Ascending aorta (tissue), 2 donors: ENCODE measurements at regions of chr4 and their contacts with region 1.

Region 1: DNA sequence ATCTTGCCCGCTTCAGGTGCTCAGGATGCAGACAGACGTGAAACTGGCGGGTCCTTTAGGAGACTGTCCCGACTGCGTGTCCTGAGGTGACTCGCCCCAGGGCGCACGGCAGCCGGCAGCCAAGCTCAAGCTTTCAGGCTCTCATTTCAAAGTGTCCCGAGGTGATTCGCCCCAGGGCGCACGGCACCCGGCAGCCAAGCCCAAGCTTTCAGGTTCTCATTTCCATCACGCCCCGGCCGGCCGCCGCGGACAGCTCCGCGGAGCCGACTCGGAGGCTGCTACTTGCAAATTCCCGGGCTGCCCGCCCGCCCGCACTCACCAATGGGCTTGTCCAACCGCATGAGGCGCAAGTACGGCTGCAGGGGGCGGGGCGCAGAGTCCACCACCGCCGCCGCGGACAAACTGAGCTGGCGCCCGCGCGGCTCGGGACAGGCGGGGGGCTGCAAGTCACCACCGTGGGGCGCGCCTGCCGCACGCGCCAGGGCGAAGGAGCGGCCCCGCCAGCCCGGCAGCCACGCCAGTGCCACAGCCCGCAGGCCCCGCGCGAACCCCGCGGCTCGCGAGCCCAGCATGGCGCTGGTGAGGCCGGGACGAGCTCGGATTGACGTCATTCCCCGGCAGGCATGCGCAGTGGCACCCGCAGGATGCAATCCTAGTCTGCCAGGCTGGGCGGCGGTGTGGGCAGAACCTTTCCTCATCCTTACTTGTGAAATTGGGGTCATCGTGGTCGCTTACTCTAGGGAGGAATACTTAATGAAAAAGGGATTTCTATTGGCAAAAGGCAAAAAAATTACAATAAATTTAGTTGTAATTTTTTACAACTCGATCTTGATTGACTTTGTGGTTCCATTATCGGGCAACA is at the start of gene COQ2:
- DNase-seq: peak; percentile 82 to 97
- H3K4me3 ChIP-seq: peak within 1 kb of the TSS; percentile 86 to 91
- H3K27ac ChIP-seq: peak within 1 kb of the TSS; percentile 93 to 94
- H3K4me1 ChIP-seq: peaks cover 0 to 4% of the 10 kb centered on the region in 2 donors
- H3K27me3 ChIP-seq: no peaks in the 10 kb centered on the region
- CTCF ChIP-seq: peak; percentile 23 to 53 (median 36)
- total RNA-seq, gene COQ2: 9.7 TPM

Region 2: GRCh38 chr4:82462415-82462831 is 822.0 kb before region 1 on chr4:
- intact Hi-C with region 1: loop called (anchors 5 kb)
- DNase-seq: peak; percentile 79 to 96
- H3K4me3 ChIP-seq: no peak overlapping the region
- H3K27ac ChIP-seq: peak overlapping the region in 1 of 2 donors; percentile 8
- H3K4me1 ChIP-seq: no peaks in the 10 kb centered on the region
- H3K27me3 ChIP-seq: no peaks in the 10 kb centered on the region
- CTCF ChIP-seq: peak; percentile 48 to 92 (median 86)

Region 3: DNA sequence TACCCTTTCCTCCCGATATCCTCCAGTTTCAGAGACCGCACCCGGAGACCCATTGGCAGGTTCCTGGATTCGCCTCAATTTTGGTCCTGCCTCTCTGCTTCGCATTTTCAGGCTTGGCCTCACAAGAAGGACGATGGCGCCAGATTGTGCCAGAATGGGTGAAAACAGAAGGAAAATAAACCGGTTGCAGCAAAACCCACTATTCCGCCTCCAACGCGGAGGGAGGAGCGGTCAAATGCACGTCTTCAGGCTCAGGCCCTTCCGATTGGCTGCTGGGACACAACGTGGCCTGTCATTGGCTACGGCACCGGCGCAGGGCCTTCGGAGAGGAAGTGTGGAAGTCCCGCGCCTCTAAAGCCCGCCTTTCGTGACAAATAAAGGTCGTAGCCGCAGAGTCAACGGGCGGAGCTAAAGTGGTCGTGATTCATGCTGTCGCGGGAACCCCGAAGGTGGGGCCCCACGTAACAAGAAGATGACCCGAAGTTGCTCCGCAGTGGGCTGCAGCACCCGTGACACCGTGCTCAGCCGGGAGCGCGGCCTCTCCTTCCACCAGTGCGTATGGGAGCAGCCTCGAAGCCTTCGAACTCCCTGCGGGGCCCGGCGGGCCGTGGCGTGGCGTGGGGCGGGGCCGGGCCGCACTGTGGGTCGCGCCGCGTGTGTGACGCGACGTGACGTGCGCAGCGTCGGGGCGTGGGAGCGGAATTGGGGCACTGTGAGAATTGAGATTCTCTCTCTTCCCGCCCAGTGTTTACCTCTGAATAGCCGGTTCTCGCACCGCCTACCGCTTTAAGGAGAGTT is 383.9 kb before region 1 on chr4 and contains the start of gene THAP9:
- intact Hi-C with region 1: loop called (anchors 1 kb)
- DNase-seq: peak; percentile 97 to 99
- H3K4me3 ChIP-seq: peak within 1 kb of the TSS; percentile 69 to 78
- H3K27ac ChIP-seq: peak within 1 kb of the TSS; percentile 98
- H3K4me1 ChIP-seq: peaks cover 0 to 20% of the 10 kb centered on the region in 2 donors
- H3K27me3 ChIP-seq: no peaks in the 10 kb centered on the region
- CTCF ChIP-seq: no peak
- total RNA-seq, gene THAP9: 0.32 TPM

Region 4: GRCh38 chr4:83074086-83074704 is 210.2 kb before region 1 on chr4:
- intact Hi-C with region 1: loop called (anchors 2 kb)
- DNase-seq: no peak
- H3K4me3 ChIP-seq: no peak overlapping the region
- H3K27ac ChIP-seq: no peak overlapping the region
- H3K4me1 ChIP-seq: no peaks in the 10 kb centered on the region
- H3K27me3 ChIP-seq: no peaks in the 10 kb centered on the region
- CTCF ChIP-seq: peak; percentile 50 to 68 (median 61)

Region 5: DNA sequence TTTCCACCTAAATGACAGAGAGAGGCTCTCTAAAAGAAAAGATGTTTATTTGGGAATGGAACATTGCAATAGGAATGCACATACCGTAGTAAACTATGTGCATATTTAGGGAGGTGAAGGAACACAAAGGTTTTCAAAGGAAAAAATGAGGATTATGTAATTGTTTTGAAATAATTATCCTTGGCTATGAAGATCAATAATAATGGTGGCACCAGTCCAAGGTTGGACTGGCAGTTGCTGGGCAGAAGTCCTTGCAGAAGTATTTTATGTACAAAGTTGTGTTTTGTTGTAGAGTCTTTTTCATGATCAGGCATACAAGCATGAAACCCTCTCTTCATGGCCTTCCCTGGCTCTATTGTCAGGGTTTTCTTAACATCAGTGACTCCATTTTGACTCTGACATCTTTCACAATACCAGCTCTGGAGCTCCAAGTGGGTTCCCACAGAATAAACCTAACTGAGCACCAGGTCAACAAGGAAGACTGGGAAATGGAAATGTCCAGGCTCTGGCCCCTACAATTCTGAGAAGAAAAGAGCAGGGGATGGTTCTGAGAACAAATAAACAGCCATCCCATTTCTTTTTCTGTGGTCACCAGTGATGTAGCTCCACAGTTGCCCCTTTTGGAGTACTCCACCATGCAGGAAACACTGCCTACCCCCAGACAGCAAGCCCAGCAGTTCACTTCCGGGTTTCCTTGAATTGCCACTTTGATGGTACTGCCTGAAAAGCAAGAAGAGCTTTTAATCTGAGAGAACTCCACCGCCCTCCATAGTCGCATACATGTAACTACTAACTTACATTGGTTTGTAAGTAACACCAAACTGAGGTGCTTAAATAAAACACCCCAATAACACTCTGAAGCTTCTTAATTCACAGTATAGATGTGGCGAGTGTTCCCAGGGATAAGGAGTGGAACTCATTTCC is 103.6 kb after region 1 on chr4:
- intact Hi-C with region 1: no loop called
- DNase-seq: no peak
- H3K4me3 ChIP-seq: no peak overlapping the region
- H3K27ac ChIP-seq: no peak overlapping the region
- H3K4me1 ChIP-seq: no peaks in the 10 kb centered on the region
- H3K27me3 ChIP-seq: no peaks in the 10 kb centered on the region
- CTCF ChIP-seq: no peak

Region 6: GRCh38 chr4:83455281-83456129 is 171.1 kb after region 1 on chr4 and contains the starts of genes HELQ and MRPS18C:
- intact Hi-C with region 1: loop called (anchors 1 kb)
- DNase-seq: peak; percentile 94 to 99
- H3K4me3 ChIP-seq: peak within 1 kb of the TSS; percentile 85 to 89
- H3K27ac ChIP-seq: peak within 1 kb of the TSS; percentile 98 to 99
- H3K4me1 ChIP-seq: peaks cover 0 to 14% of the 10 kb centered on the region in 2 donors
- H3K27me3 ChIP-seq: no peaks in the 10 kb centered on the region
- CTCF ChIP-seq: peak in 2 of 3 experiments; percentile 26 to 42
- total RNA-seq, gene HELQ: 1.1 TPM
- total RNA-seq, gene MRPS18C: 13.0 TPM